ENCODE measurements at regions of chr17 and their contacts with region 1.

Region 1: DNA sequence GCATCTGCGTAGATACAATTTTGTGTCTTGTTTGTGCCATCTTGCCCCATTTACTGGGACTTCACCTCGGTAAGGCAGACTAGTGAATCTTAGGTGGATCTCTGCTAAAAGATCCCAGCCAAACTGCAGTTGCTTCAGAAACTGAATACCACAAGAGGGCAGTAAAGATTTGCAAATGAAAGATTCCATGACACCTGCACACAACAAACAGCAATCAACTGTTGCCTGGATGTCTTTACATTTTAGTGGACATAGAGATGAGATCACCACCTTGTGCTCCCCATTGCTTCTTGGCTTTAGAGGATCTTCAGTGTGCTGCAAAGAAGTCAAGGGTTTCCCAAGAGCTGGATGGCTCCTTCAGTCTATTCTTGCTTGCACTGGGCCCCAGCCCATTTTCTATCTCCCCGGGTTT is 119.2 kb upstream of the CACNG5 start:
- DNase-seq: peak; percentile 81
- H3K4me3 ChIP-seq: no peak overlapping the region
- H3K27ac ChIP-seq: no peak overlapping the region
- H3K4me1 ChIP-seq: peaks cover 45% of the 10 kb centered on the region
- CTCF ChIP-seq: peak; percentile 93

Region 2: GRCh38 chr17:66200685-66201092 is 515.1 kb before region 1 on chr17:
- CTCF ChIA-PET with region 1: no interaction called
- POLR2A ChIA-PET with region 1: interaction called, 3 read pairs
- intact Hi-C with region 1: loop called (anchors 5 kb)
- DNase-seq: peak; percentile 66
- H3K4me3 ChIP-seq: no peak overlapping the region
- H3K27ac ChIP-seq: no peak overlapping the region
- H3K4me1 ChIP-seq: no peaks in the 10 kb centered on the region
- CTCF ChIP-seq: peak; percentile 82

Region 3: DNA sequence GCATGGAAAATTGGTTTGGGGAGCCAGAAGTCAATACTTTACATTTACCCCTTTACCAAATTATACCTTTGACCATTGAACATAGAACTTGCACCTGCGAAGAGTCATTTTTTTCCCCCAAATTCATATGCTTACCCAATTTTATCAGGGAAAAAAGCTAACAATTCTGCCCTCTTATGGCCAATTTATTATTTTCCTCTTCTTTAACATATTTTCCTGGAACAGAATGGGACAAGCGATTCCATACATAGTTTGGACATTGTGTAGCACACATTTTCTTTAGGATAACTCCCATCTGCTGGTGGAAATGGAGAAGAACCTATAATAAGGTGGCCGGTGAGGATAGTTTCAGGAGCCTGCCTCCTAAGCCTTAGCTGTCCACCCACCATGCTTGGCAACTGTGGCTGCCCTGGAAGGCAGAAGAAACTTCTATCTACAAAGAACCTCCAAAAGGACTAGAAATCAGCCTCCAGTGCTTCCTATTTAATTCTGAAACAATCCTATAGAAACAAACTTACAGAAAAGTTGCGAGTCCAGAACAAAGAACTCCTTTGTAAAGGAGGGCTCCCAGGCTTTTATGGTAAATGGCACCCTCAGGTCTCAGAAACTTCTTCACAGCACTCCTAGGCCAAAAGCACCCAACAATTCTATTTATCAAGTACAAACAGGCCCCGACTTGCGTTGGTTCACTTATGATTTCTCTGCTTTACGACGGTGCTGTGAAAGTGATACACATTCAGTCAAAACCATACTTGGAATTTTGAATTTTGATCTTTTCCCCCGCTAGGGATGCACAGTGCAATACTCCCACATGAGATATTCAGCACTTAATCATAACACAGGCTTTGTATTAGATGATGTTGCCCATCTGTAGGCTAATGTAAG is 184.6 kb after region 1 on chr17:
- CTCF ChIA-PET with region 1: no interaction called
- POLR2A ChIA-PET with region 1: interaction called, 4 read pairs
- intact Hi-C with region 1: loop called (anchors 1 kb)
- DNase-seq: peak; percentile 11
- H3K4me3 ChIP-seq: no peak overlapping the region
- H3K27ac ChIP-seq: no peak overlapping the region
- H3K4me1 ChIP-seq: no peaks in the 10 kb centered on the region
- CTCF ChIP-seq: peak; percentile 79

Region 4: GRCh38 chr17:66906321-66907278 is 190.8 kb after region 1 on chr17:
- CTCF ChIA-PET with region 1: no interaction called
- POLR2A ChIA-PET with region 1: interaction called, 4 read pairs
- intact Hi-C with region 1: loop called (anchors 1 kb)
- DNase-seq: peak; percentile 69
- H3K4me3 ChIP-seq: no peak overlapping the region
- H3K27ac ChIP-seq: no peak overlapping the region
- H3K4me1 ChIP-seq: no peaks in the 10 kb centered on the region
- CTCF ChIP-seq: peak; percentile 96

Region 5: DNA sequence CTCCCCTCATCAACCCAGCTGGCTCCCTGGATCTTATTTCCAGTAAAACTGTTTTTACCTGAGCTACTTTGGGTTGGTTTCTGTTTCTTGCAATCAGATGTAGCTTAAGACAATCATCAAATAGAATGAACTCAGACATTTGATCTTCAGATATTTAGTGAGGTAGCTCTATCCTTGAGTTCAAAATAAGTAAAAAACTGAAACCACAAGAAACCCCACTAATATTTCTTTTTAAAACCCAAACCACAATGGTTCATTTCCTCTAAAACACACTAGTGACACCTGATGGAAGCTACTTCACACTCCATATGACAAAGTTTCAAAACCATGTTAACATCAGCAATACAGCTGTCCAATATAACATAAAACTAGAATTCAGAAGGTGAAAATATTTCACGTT is 366.4 kb after region 1 on chr17:
- CTCF ChIA-PET with region 1: no interaction called
- POLR2A ChIA-PET with region 1: no interaction called
- intact Hi-C with region 1: loop called (anchors 5 kb)
- DNase-seq: peak; percentile 62
- H3K4me3 ChIP-seq: peak overlapping the region; percentile 9
- H3K27ac ChIP-seq: peak overlapping the region; percentile 51
- H3K4me1 ChIP-seq: peaks cover 33% of the 10 kb centered on the region
- CTCF ChIP-seq: peak; percentile 72

Measured in OCI-LY7 (cell line).